ENCODE measurements at regions of chr4 and their contacts with region 1.

Region 1: GRCh38 chr4:187380181-187380641 is 615.4 kb upstream of the ZFP42 start:
- DNase-seq: no peak
- H3K4me3 ChIP-seq: no peak overlapping the region
- H3K27ac ChIP-seq: no peak overlapping the region
- H3K4me1 ChIP-seq: peaks cover 5% of the 10 kb centered on the region
- H3K27me3 ChIP-seq: no peaks in the 10 kb centered on the region
- CTCF ChIP-seq: peak; percentile 42 to 60

Region 2: GRCh38 chr4:186643501-186644310 is 736.5 kb before region 1 on chr4:
- CTCF ChIA-PET with region 1: no interaction called
- dilution Hi-C with region 1: no loop called
- in situ Hi-C with region 1: no loop called
- intact Hi-C with region 1: no loop called
- DNase-seq: peak; percentile 77
- H3K4me3 ChIP-seq: no peak overlapping the region
- H3K27ac ChIP-seq: peak overlapping the region; percentile 39
- H3K4me1 ChIP-seq: peaks cover 16% of the 10 kb centered on the region
- H3K27me3 ChIP-seq: no peaks in the 10 kb centered on the region
- CTCF ChIP-seq: no peak

Region 3: GRCh38 chr4:186946682-186947294 is 433.4 kb before region 1 on chr4:
- CTCF ChIA-PET with region 1: no interaction called
- dilution Hi-C with region 1: no loop called
- in situ Hi-C with region 1: no loop called
- intact Hi-C with region 1: loop called (anchors 10 kb)
- DNase-seq: no peak
- H3K4me3 ChIP-seq: no peak overlapping the region
- H3K27ac ChIP-seq: no peak overlapping the region
- H3K4me1 ChIP-seq: no peaks in the 10 kb centered on the region
- H3K27me3 ChIP-seq: no peaks in the 10 kb centered on the region
- CTCF ChIP-seq: peak; percentile 22 to 33